Activated T-helper 1 cell treated with anti-CD3 and anti-CD28 coated beads, Interleukin-12 subunit alpha, Interleukin-12 subunit beta, Interleukin-2, Interleukin-4 antibody, amounts not matched to agents 30 ng/mL and 10 ng/mL and 1 ng/mL, durations not matched to agents 14 hours and 24 hours and 36 hours (primary cell): ENCODE measurements at regions of chr9 and their contacts with region 1.

Region 1: GRCh38 chr9:120477521-120478001 is 102.4 kb downstream of the CDK5RAP2 start:
- DNase-seq: peak; percentile 4
- H3K4me3 Mint-ChIP-seq: no peak overlapping the region
- H3K27ac Mint-ChIP-seq: no peak overlapping the region
- H3K4me1 Mint-ChIP-seq: peaks cover 20% of the 10 kb centered on the region
- H3K27me3 Mint-ChIP-seq: no peaks in the 10 kb centered on the region

Region 2: GRCh38 chr9:119634006-119634405 is 843.6 kb before region 1 on chr9:
- intact Hi-C with region 1: loop called (anchors 5 kb)
- DNase-seq: no peak
- H3K4me3 Mint-ChIP-seq: no peak overlapping the region
- H3K27ac Mint-ChIP-seq: no peak overlapping the region
- H3K4me1 Mint-ChIP-seq: no peaks in the 10 kb centered on the region
- H3K27me3 Mint-ChIP-seq: no peaks in the 10 kb centered on the region

Region 3: DNA sequence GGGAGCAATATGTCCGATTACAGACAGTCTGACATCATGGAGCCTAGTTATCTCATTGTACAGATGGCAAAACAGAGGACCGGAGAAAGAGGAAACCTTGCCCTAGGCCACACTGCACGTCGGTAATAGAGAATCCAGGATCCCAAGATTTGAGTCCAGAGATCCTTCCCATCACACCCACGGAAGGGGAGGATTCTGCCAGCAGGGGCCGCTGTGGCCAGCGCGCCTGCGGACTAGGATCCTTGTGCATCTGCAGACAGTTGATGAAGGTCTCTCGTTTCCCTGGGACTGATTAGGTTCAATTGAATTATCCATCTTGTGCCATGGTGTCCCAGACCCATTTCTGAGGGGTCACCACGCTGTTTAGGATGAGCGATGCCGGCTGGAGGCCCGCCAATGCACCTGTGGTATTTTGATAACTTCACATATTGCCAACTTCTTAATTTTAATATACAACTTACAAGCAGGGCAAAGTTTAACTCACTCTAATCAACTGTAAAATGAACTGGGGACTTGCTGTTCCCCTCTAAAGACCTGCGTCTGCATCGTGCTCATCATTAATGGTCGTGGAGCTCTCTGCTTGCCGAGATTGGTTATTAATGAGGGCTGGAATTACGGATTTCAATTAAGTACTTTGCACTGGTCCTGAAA is 515.7 kb before region 1 on chr9:
- intact Hi-C with region 1: loop called (anchors 5 kb)
- DNase-seq: no peak
- H3K4me3 Mint-ChIP-seq: no peak overlapping the region
- H3K27ac Mint-ChIP-seq: no peak overlapping the region
- H3K4me1 Mint-ChIP-seq: no peaks in the 10 kb centered on the region
- H3K27me3 Mint-ChIP-seq: peaks cover 4% of the 10 kb centered on the region

Region 4: DNA sequence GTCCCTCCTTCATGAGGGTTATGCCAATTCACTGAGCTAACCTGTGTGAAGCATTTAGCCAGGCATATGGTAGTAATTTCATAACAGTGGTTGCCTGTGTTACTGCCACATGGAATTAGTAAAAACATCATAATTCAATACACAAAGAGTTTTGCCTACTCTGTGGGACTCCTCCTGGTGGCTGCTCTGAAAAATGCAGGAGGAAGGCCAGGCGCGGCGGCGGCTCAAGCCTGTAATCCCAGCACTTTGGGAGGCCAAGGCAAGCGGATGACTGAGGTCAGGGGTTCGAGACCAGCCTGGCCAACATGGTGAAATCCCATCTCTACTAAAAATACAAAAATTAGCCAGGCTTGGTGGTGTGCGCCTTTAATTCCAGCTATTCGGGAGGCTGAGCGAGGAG is 444.9 kb before region 1 on chr9:
- intact Hi-C with region 1: loop called (anchors 10 kb)
- DNase-seq: no peak
- H3K4me3 Mint-ChIP-seq: no peak overlapping the region
- H3K27ac Mint-ChIP-seq: no peak overlapping the region
- H3K4me1 Mint-ChIP-seq: no peaks in the 10 kb centered on the region
- H3K27me3 Mint-ChIP-seq: no peaks in the 10 kb centered on the region

Region 5: DNA sequence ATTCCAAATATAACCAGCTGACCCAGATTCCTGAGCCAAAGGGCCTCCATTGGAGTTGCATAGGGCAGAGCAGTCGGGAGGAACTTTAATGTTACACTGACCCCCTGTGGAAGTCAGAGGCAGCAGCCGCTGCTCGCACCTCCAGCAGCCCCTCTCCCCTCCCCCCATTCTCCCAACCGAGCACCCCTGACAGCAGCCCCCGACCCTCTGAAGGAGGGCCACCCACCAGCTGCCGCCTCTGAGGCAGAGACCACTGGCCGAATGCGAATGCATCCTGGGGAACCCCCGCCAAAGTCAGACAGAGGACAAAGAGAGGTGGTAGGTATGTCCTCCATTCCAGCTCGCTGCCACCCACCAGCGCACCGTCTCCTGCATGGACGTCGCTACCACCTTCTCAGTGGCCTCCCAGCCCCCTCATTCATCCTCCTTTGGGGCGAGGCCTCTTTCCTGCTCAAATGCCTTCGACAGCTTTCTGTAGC is 128.6 kb before region 1 on chr9:
- intact Hi-C with region 1: loop called (anchors 10 kb)
- DNase-seq: no peak
- H3K4me3 Mint-ChIP-seq: no peak overlapping the region
- H3K27ac Mint-ChIP-seq: no peak overlapping the region
- H3K4me1 Mint-ChIP-seq: no peaks in the 10 kb centered on the region
- H3K27me3 Mint-ChIP-seq: peaks cover 3% of the 10 kb centered on the region